ENCODE measurements at regions of chr4 and their contacts with region 1.

Region 1: DNA sequence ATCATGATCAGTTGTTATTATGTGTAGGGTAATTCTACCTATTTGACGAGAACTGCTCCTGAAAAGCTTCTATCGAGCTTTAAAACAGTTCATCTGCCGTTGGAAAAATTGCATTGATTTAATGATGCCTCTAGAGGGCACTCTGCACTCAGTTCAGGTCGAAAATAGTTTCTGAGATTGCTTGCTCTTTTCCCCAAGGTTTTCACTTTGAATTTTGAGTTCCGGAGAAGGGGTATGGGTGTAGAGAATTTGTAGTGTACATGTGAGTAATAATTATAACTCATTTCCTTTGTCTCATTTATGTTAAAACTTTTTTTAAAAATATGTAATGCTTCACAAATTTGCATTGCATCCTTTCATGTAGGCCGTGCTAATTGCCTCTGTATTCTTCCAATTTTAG is 28.4 kb upstream of the TNIP3 start:
- DNase-seq: peak in 2 of 4 donors; percentile 65 to 73
- ATAC-seq: peak; percentile 92
- H3K4me3 ChIP-seq: no peak overlapping the region
- H3K27ac ChIP-seq: no peak overlapping the region
- H3K4me1 ChIP-seq: peaks cover 0 to 7% of the 10 kb centered on the region in 2 donors
- H3K27me3 ChIP-seq: no peaks in the 10 kb centered on the region
- CTCF ChIP-seq: peak; percentile 37 to 83

Region 2: GRCh38 chr4:121252224-121252806 is 59.8 kb after region 1 on chr4:
- intact Hi-C with region 1: loop called in 1 of 2 experiments (anchors 10 kb)
- DNase-seq: peak in 3 of 4 donors; percentile 65 to 84 (median 74)
- ATAC-seq: peak; percentile 92
- H3K4me3 ChIP-seq: no peak overlapping the region
- H3K27ac ChIP-seq: no peak overlapping the region
- H3K4me1 ChIP-seq: peaks cover 0 to 20% of the 10 kb centered on the region in 2 donors
- H3K27me3 ChIP-seq: no peaks in the 10 kb centered on the region
- CTCF ChIP-seq: peak; percentile 78 to 80

Region 3: GRCh38 chr4:121668368-121669162 is 476.1 kb after region 1 on chr4:
- intact Hi-C with region 1: no loop called
- DNase-seq: no peak
- ATAC-seq: peak; percentile 73
- H3K4me3 ChIP-seq: no peak overlapping the region
- H3K27ac ChIP-seq: peak overlapping the region in 1 of 2 donors; percentile 20
- H3K4me1 ChIP-seq: peaks cover 0 to 6% of the 10 kb centered on the region in 2 donors
- H3K27me3 ChIP-seq: no peaks in the 10 kb centered on the region
- CTCF ChIP-seq: no peak

Measured in left lung (tissue), 14 donors.